ENCODE measurements at regions of chr16 and their contacts with region 1.

Region 1: GRCh38 chr16:2155091-2156021 is at the start of gene TRAF7:
- DNase-seq: peak; percentile 99 to 100
- H3K4me3 ChIP-seq: peak within 1 kb of the TSS; percentile 99
- H3K27ac ChIP-seq: peak within 1 kb of the TSS; percentile 73
- H3K4me1 ChIP-seq: peaks cover 38% of the 10 kb centered on the region
- H3K27me3 ChIP-seq: no peaks in the 10 kb centered on the region
- CTCF ChIP-seq: no peak
- total RNA-seq, gene TRAF7: 166 and 199 TPM in 2 replicates

Region 2: DNA sequence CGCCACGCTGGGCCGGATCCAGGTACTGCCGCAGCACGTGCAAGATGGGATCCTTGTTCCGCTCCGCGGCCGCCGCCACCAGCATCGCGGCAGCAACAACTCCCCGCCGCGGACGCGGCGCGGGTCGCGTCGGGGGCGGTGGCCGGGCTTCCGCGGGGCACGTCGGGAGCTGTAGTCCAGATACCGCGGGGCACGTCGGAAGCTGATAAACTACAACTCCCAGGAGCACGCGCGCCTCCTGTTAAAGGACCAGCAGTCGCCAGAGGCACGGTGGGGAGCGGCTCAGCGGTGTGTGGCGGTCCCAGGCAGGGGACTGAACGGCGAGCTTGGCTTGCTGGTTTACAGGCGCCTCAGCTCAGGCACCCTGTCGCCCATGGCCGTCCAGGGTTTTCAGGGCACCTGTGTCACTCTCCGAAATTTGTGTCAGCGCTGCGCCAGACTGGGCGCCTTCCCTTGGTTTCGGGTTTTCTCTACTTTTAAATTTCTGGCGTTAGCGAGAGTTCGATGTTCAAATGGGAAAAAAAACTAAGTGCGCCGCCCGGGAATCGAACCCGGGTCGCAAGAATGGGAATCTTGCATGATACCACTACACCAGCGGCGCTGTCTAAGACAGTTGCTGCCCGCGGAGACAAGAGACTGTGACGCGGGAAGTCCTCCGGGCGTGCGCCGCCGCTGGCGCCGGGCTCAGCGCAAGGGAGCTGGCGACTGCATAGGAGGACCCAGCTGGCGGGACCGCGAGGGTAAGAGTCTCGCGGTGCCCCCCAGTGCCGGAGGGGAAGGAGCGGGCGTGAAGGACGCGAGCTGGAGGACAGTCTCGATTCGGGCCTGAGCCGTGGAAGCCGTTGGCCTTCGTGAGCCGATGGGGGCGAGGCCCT is 1518.9 kb before region 1 on chr16 and contains the start of gene METTL26:
- CTCF ChIA-PET with region 1: no interaction called
- POLR2A ChIA-PET with region 1: interaction called, 14 read pairs
- intact Hi-C with region 1: no loop called
- DNase-seq: peak; percentile 85 to 94
- H3K4me3 ChIP-seq: peak within 1 kb of the TSS; percentile 80
- H3K27ac ChIP-seq: peak within 1 kb of the TSS; percentile 80
- H3K4me1 ChIP-seq: peaks cover 11% of the 10 kb centered on the region; the same call in 1 of the 2 replicates
- H3K27me3 ChIP-seq: no peaks in the 10 kb centered on the region
- CTCF ChIP-seq: no peak
- total RNA-seq, gene METTL26: 144 and 158 TPM in 2 replicates

Region 3: GRCh38 chr16:2009789-2010510 is 145.4 kb before region 1 on chr16 and contains the start of gene ZNF598:
- CTCF ChIA-PET with region 1: interaction called, 8 read pairs
- POLR2A ChIA-PET with region 1: interaction called, 16 read pairs
- intact Hi-C with region 1: no loop called
- DNase-seq: peak; percentile 52 to 82
- H3K4me3 ChIP-seq: peak within 1 kb of the TSS; percentile 88
- H3K27ac ChIP-seq: peak within 1 kb of the TSS; percentile 86
- H3K4me1 ChIP-seq: peaks cover 27% of the 10 kb centered on the region
- H3K27me3 ChIP-seq: no peaks in the 10 kb centered on the region
- CTCF ChIP-seq: no peak
- total RNA-seq, gene ZNF598: 68.4 and 72.5 TPM in 2 replicates

Region 4: GRCh38 chr16:2213817-2214720 is 58.7 kb after region 1 on chr16:
- CTCF ChIA-PET with region 1: no interaction called
- POLR2A ChIA-PET with region 1: interaction called, 11 read pairs
- intact Hi-C with region 1: loop called (anchors 1 kb)
- DNase-seq: no peak
- H3K4me3 ChIP-seq: peak overlapping the region; percentile 85
- H3K27ac ChIP-seq: no peak overlapping the region
- H3K4me1 ChIP-seq: peaks cover 28% of the 10 kb centered on the region
- H3K27me3 ChIP-seq: no peaks in the 10 kb centered on the region
- CTCF ChIP-seq: no peak

Region 5: DNA sequence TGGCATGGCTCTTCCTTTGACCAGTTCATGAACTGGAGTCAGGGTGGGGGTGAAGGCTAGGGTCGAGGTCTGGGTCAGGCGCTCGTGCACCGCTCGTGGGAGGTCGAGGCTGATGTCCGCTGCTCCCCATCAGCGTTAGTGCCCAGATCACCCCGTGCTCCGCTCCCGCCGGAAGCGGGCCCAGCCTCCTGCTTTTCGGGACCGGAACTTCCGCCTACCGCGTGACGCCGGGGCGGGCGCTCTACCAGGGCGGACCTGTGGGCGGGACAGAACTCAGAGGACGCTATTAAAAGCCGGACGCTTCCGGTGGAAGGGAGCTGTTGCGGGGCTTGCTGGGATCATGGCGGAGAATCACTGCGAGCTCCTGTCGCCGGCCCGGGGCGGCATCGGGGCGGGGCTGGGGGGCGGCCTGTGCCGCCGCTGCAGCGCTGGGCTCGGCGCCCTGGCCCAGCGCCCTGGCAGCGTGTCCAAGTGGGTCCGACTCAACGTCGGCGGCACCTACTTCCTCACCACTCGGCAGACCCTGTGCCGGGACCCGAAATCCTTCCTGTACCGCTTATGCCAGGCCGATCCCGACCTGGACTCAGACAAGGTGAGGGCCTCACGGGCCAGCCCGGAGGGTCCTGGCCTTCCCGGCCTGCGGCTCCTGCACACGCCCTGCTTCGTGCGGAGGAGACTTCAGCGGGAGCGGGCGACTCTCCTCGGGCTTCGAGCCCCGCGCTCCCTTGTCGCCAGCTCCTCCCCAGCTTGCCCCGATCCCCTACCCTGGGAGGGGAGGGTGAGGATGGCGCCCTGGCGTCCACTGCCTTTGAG is 527.1 kb after region 1 on chr16 and contains the start of gene KCTD5:
- CTCF ChIA-PET with region 1: no interaction called
- POLR2A ChIA-PET with region 1: interaction called, 16 read pairs
- intact Hi-C with region 1: no loop called
- DNase-seq: peak; percentile 95 to 100
- H3K4me3 ChIP-seq: peak within 1 kb of the TSS; percentile 81
- H3K27ac ChIP-seq: peak within 1 kb of the TSS; percentile 72
- H3K4me1 ChIP-seq: peaks cover 33% of the 10 kb centered on the region
- H3K27me3 ChIP-seq: no peaks in the 10 kb centered on the region
- CTCF ChIP-seq: no peak
- total RNA-seq, gene KCTD5: 60.4 and 66.5 TPM in 2 replicates